Left colon (tissue), 2 donors: ENCODE measurements at regions of chr22 and their contacts with region 1.

Region 1: GRCh38 chr22:36470162-36470993 is 11.1 kb downstream of the TXN2 start:
- DNase-seq: peak; percentile 78 to 83
- ATAC-seq: peak; percentile 77

Region 2: GRCh38 chr22:36301384-36301828 is 169.0 kb before region 1 on chr22:
- intact Hi-C with region 1: loop called (anchors 2 to 5 kb)
- DNase-seq: peak; percentile 73 to 78
- ATAC-seq: peak; percentile 58